Panc1 (cell line): ENCODE measurements at regions of chr1 and their contacts with region 1.

Region 1: DNA sequence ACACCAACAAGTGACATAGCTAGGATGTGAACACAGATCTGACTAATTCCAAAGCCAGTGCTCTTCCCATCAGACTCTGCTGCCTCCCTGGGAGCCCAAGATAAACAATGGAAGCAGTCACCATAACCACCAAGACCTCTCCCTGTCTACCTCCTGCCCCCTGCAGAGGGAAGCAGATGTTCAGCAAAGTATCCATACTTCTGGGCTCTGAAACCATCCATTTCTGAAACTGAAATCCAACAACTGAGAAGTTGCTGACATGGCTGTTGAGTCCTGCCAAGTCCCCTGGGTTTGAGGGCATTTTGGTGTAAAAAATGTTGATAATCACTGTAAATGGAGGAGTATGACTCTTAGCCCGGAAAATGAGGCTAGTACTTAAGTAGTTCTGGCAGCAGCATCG is 102.1 kb downstream of the TYW3 start:
- DNase-seq: no peak
- ATAC-seq: no peak
- H3K4me3 ChIP-seq: no peak overlapping the region
- H3K27ac ChIP-seq: no peak overlapping the region
- H3K4me1 ChIP-seq: no peaks in the 10 kb centered on the region
- H3K27me3 ChIP-seq: no peaks in the 10 kb centered on the region
- CTCF ChIP-seq: no peak

Region 2: DNA sequence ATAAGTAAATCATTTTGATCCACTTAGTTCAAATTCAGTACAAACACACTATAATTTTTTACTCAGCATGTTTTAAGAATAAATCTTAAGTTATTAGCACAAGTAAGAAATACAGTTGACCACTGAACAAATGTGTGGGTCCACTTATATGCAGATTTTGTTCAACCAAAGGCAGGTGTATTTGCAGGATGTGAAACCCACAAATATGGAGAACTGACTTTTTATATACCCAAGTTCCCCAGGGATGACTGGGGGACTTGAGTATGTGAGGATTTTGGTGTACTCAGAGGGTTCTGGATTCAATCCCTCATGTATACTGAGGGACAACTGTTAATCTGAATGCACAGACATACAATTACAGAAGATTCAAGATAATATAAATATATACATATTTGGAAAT is 135.7 kb before region 1 on chr1:
- CTCF ChIA-PET with region 1: no interaction called
- POLR2A ChIA-PET with region 1: no interaction called
- in situ Hi-C with region 1: no loop called
- intact Hi-C with region 1: no loop called
- DNase-seq: no peak
- ATAC-seq: no peak
- H3K4me3 ChIP-seq: no peak overlapping the region
- H3K27ac ChIP-seq: no peak overlapping the region
- H3K4me1 ChIP-seq: no peaks in the 10 kb centered on the region
- H3K27me3 ChIP-seq: no peaks in the 10 kb centered on the region
- CTCF ChIP-seq: no peak

Region 3: DNA sequence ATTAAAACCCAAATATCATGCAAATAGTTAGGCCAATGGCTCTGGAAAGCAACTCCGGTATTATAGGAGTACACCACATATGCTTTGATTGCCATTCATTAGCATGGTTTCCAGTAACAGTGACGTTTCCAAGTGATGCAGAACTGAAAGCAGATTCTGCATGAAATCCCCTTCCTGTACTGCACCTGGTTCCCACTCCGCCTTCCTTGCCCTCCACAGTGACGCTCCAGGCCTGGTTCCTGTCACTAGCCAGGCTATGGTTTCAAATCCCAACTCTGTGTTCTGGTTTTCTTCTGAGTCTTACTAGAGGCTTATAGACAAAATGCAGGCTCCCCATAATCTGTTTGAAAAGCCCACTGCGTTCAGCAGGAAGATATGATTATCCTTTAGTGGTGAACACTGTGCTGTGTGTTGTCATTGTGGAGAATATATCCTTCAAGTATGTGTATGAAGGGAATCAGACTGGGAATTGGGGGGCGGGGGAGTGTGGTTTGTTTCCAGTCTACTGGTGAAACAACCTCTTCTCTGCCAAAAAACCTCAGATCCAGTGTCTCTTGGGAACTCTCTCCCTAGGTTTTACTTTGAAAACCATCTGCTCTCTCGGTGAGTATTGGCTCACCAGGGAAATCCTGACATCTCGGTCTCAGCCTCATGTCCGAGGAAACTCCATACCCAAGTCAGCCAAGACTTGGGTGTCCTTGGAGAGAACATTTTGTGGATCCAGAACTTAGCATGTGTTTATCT is 23.4 kb before region 1 on chr1:
- CTCF ChIA-PET with region 1: no interaction called
- POLR2A ChIA-PET with region 1: interaction called, 4 read pairs
- in situ Hi-C with region 1: no loop called
- intact Hi-C with region 1: loop called (anchors 2 kb)
- DNase-seq: no peak
- ATAC-seq: no peak
- H3K4me3 ChIP-seq: no peak overlapping the region
- H3K27ac ChIP-seq: no peak overlapping the region
- H3K4me1 ChIP-seq: no peaks in the 10 kb centered on the region
- H3K27me3 ChIP-seq: no peaks in the 10 kb centered on the region
- CTCF ChIP-seq: no peak